Activated T-helper 1 cell treated with anti-CD3 and anti-CD28 coated beads, Interleukin-12 subunit alpha, Interleukin-12 subunit beta, Interleukin-2, Interleukin-4 antibody, amounts not matched to agents 30 ng/mL and 10 ng/mL and 1 ng/mL, durations not matched to agents 14 hours and 24 hours and 36 hours (primary cell): ENCODE measurements at regions of chr1 and their contacts with region 1.

Region 1: GRCh38 chr1:89358287-89358893 is 5.5 kb upstream of the GBP6 start:
- DNase-seq: peak; percentile 76
- H3K4me3 Mint-ChIP-seq: peak overlapping the region; percentile 73
- H3K27ac Mint-ChIP-seq: peak overlapping the region; percentile 80
- H3K4me1 Mint-ChIP-seq: peaks cover 69% of the 10 kb centered on the region
- H3K27me3 Mint-ChIP-seq: no peaks in the 10 kb centered on the region

Region 2: DNA sequence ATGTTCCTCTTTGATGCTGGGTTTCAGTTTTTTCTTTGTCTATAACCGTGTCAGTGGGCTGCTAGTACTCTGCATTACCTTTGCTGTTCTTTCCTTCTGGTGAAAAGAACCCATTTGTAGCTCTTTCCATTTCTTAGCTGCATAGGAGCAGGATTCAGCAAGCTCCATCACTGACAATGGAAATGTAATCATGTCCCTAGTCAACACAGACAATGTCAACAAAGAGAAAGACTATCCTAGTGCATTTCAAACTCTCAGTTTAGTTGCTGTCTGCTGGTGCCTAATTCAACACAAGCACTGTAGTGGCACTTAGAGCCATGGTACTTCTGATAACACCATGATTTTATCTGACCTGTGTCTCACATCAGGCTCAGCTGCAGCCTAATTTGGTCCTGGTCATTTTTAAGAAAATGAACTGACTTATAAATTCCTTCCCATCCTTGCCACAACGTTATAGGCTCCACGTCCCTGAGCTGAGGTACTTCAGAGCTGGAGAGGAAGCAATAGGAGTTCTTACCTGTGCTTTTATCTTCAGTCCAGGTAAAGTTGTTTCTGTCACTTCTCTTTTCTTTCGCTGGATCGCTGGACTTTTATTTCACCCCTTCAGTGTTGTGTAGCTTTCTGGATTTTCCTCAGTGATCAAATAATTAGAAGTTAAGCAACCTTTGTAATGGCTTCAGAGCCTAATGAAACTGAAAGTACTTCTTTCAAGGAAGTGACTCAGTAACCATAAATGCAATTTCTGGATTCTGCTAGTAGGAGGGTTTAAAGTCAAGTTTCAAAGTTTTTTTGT is 336.0 kb before region 1 on chr1 and contains the start of gene GBP3:
- intact Hi-C with region 1: loop called (anchors 1 kb)
- DNase-seq: no peak
- H3K4me3 Mint-ChIP-seq: peak within 1 kb of the TSS; percentile 86
- H3K27ac Mint-ChIP-seq: peak within 1 kb of the TSS; percentile 84
- H3K4me1 Mint-ChIP-seq: peaks cover 64% of the 10 kb centered on the region
- H3K27me3 Mint-ChIP-seq: no peaks in the 10 kb centered on the region
- total RNA-seq, gene GBP3: 12.0 and 14.5 TPM in 2 replicates

Region 3: DNA sequence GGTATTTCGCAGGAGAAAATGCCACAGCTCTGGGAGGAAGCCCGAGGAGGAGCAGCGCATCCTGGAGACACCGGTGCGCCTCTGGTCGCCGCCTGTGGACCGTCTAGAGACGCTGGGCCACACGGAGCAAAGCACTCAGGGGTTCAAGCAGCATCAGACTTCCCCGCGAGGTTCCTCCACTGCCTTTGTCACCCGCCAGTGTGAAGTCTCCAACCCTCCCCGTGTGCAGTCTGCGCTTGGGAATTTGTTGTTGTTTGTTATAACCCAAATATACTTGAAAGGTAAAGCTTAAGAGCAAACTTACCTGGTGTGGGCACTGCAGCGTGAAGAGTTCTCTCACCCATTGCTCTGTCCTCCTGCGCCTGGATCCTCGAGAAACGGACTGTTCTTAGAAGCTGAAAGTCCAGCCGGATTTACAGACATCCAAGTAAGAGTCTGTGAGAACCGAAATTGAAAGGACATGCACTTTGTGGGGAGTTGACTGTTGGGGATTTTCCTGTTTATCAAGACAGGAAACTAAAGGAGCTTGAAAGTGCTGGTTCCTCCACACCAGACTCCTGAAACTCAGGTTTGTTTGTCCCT is 159.8 kb before region 1 on chr1 and contains the start of gene GBP4:
- intact Hi-C with region 1: loop called (anchors 1 kb)
- DNase-seq: peak; percentile 43
- H3K4me3 Mint-ChIP-seq: peak within 1 kb of the TSS; percentile 93
- H3K27ac Mint-ChIP-seq: peak within 1 kb of the TSS; percentile 93
- H3K4me1 Mint-ChIP-seq: peaks cover 88% of the 10 kb centered on the region
- H3K27me3 Mint-ChIP-seq: no peaks in the 10 kb centered on the region
- total RNA-seq, gene GBP4: 36.8 and 37.5 TPM in 2 replicates

Region 4: GRCh38 chr1:89298461-89298860 is 59.9 kb before region 1 on chr1:
- intact Hi-C with region 1: loop called (anchors 1 kb)
- DNase-seq: no peak
- H3K4me3 Mint-ChIP-seq: peak overlapping the region; percentile 37
- H3K27ac Mint-ChIP-seq: peak overlapping the region; percentile 75
- H3K4me1 Mint-ChIP-seq: peaks cover 81% of the 10 kb centered on the region
- H3K27me3 Mint-ChIP-seq: no peaks in the 10 kb centered on the region

Region 5: GRCh38 chr1:89429062-89429461 is 70.7 kb after region 1 on chr1:
- intact Hi-C with region 1: loop called (anchors 1 kb)
- DNase-seq: no peak
- H3K4me3 Mint-ChIP-seq: no peak overlapping the region
- H3K27ac Mint-ChIP-seq: no peak overlapping the region
- H3K4me1 Mint-ChIP-seq: peaks cover 10% of the 10 kb centered on the region
- H3K27me3 Mint-ChIP-seq: peaks cover 12% of the 10 kb centered on the region